Endothelial cell of umbilical vein (primary cell): ENCODE measurements at regions of chr1 and their contacts with region 1.

Region 1: DNA sequence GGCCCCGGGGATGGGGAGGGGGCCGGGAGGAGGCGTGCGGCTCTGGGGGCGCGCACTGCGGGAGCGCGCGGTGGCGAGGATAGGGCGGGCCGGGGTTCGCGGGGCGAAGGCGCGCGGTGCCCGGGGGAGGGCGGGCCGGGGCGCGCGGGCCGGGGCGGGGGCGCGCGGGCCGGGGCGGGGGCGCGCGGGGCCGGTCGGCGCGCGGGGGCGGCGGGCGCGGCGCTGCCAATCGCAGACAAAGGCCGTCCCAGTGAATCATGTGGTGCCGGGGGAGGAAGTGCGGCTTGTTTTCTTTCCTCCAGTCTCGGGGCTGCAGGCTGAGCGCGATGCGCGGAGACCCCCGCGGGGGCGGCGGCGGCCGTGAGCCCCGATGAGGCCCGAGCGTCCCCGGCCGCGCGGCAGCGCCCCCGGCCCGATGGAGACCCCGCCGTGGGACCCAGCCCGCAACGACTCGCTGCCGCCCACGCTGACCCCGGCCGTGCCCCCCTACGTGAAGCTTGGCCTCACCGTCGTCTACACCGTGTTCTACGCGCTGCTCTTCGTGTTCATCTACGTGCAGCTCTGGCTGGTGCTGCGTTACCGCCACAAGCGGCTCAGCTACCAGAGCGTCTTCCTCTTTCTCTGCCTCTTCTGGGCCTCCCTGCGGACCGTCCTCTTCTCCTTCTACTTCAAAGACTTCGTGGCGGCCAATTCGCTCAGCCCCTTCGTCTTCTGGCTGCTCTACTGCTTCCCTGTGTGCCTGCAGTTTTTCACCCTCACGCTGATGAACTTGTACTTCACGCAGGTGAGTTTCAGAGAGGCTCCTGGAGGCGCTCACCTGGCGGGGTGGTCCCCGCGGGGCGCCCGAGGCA is at the start of gene GPR137B:
- DNase-seq: peak; percentile 55
- H3K4me3 ChIP-seq: peak within 1 kb of the TSS; percentile 69 to 87 (median 85)
- H3K27ac ChIP-seq: no peak within 1 kb of the TSS
- H3K4me1 ChIP-seq: peaks cover 16% of the 10 kb centered on the region
- H3K27me3 ChIP-seq: peaks cover 10 to 14% of the 10 kb centered on the region in 2 experiments
- CTCF ChIP-seq: no peak
- POLR2A ChIP-seq: no peak
- total RNA-seq, gene GPR137B: 11.9 and 12.1 TPM in 2 replicates

Region 2: DNA sequence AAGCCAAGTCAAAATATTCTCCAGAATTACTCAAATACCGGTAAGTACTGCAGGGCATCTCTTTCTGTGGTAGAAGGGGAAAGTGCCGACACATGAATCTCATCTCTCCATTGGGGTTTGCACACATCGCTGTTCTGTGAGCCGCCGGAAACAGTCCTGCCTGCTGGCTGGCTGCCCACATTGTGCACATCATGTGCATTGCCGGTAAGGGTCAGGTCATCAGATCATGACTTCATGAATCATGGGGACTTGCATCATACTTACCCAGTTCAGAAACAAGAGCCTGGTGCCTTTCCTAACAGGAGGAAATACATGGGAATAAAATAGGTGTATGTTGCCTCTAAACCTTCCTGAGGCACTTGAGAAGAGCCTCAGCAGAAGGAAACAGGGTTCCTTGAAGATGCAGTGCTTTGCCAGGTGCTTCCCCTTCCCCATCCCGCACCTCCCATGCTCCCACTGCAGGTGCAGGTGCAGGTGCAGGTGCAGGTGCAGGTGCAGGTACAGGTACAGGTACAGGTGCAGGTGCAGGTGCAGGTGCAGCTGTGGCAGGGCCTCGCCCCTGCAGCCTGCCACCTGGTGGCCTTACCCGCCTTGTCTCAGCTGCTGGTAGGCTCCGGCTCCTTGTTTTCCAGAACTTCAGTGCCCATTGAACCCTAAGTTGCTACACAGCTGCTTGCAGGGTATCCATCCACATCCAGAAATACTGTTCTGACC is 26.4 kb after region 1 on chr1:
- CTCF ChIA-PET with region 1: no interaction called
- POLR2A ChIA-PET with region 1: no interaction called
- dilution Hi-C with region 1: no loop called
- intact Hi-C with region 1: loop called (anchors 2 kb)
- DNase-seq: peak; percentile 44
- H3K4me3 ChIP-seq: no peak overlapping the region
- H3K27ac ChIP-seq: no peak overlapping the region
- H3K4me1 ChIP-seq: no peaks in the 10 kb centered on the region
- H3K27me3 ChIP-seq: no peaks in the 10 kb centered on the region
- CTCF ChIP-seq: no peak
- POLR2A ChIP-seq: no peak

Region 3: GRCh38 chr1:236206548-236206947 is 64.1 kb after region 1 on chr1:
- CTCF ChIA-PET with region 1: no interaction called
- POLR2A ChIA-PET with region 1: no interaction called
- dilution Hi-C with region 1: no loop called
- intact Hi-C with region 1: loop called (anchors 2 kb)
- DNase-seq: no peak
- H3K4me3 ChIP-seq: no peak overlapping the region
- H3K27ac ChIP-seq: no peak overlapping the region
- H3K4me1 ChIP-seq: peaks cover 3% of the 10 kb centered on the region
- H3K27me3 ChIP-seq: no peaks in the 10 kb centered on the region
- CTCF ChIP-seq: no peak
- POLR2A ChIP-seq: no peak

Region 4: GRCh38 chr1:236281654-236282424 is 139.4 kb after region 1 on chr1 and contains the start of gene ERO1B:
- CTCF ChIA-PET with region 1: no interaction called
- POLR2A ChIA-PET with region 1: no interaction called
- dilution Hi-C with region 1: no loop called
- intact Hi-C with region 1: loop called (anchors 1 kb)
- DNase-seq: peak; percentile 95
- H3K4me3 ChIP-seq: peak within 1 kb of the TSS; percentile 39 to 99 (median 65)
- H3K27ac ChIP-seq: no peak within 1 kb of the TSS
- H3K4me1 ChIP-seq: peaks cover 3% of the 10 kb centered on the region
- H3K27me3 ChIP-seq: peaks cover 16 to 22% of the 10 kb centered on the region in 2 experiments
- CTCF ChIP-seq: peak in 1 of 2 donors; percentile 2
- POLR2A ChIP-seq: peak; percentile 21
- total RNA-seq, gene ERO1B: 3.6 and 5.1 TPM in 2 replicates